Activated CD4-positive, alpha-beta memory T cell treated with anti-CD3 and anti-CD28 coated beads for 36 hours (primary cell): ENCODE measurements at regions of chr6 and their contacts with region 1.

Region 1: DNA sequence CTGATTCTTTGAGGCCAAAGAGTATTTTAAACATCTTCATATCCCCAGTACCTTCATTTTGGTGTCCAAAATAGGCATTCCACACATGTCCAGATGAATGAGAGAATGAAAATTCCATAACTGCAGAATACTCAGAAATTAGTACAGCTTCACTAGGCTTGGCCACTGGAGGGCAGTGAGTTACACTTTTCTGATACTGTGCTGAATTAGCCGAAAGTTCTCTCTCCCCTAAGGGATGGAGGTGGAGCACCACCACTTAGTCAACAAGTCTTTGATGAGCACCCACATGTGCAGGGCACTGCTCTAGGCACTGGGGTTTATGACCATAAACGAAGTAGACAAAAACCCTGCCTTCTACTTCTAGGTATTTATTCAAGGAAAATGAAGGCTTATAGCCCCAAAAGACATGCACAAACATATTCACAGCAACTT is 46.0 kb upstream of the TMEM217 start:
- DNase-seq: peak; percentile 28
- H3K4me3 Mint-ChIP-seq: no peak overlapping the region
- H3K27ac Mint-ChIP-seq: no peak overlapping the region
- H3K4me1 Mint-ChIP-seq: peaks cover 8% of the 10 kb centered on the region
- H3K27me3 Mint-ChIP-seq: no peaks in the 10 kb centered on the region

Region 2: DNA sequence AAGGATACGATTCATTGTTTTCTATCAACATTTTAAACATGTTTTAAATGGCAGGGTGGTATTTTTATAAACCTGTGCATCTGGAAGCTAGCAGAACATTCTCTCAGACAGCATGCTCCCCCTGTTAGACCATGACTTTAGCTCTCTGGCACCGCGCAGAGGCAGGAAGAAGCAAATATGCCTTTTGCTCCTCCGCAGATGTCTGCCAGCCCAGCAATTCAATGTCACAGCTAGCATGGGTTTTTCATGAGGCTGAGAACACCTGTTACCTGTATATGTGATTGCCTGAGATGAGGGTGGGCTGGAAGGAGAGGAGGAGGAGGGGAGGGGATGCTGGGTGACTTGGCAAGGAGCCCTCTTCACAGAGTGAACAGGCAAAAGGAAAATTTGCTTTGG is 324.6 kb before region 1 on chr6:
- CTCF ChIA-PET with region 1: no interaction called
- POLR2A ChIA-PET with region 1: no interaction called
- intact Hi-C with region 1: no loop called
- DNase-seq: peak; percentile 41
- H3K4me3 Mint-ChIP-seq: no peak overlapping the region
- H3K27ac Mint-ChIP-seq: peak overlapping the region; percentile 47
- H3K4me1 Mint-ChIP-seq: peaks cover 24% of the 10 kb centered on the region
- H3K27me3 Mint-ChIP-seq: no peaks in the 10 kb centered on the region

Region 3: DNA sequence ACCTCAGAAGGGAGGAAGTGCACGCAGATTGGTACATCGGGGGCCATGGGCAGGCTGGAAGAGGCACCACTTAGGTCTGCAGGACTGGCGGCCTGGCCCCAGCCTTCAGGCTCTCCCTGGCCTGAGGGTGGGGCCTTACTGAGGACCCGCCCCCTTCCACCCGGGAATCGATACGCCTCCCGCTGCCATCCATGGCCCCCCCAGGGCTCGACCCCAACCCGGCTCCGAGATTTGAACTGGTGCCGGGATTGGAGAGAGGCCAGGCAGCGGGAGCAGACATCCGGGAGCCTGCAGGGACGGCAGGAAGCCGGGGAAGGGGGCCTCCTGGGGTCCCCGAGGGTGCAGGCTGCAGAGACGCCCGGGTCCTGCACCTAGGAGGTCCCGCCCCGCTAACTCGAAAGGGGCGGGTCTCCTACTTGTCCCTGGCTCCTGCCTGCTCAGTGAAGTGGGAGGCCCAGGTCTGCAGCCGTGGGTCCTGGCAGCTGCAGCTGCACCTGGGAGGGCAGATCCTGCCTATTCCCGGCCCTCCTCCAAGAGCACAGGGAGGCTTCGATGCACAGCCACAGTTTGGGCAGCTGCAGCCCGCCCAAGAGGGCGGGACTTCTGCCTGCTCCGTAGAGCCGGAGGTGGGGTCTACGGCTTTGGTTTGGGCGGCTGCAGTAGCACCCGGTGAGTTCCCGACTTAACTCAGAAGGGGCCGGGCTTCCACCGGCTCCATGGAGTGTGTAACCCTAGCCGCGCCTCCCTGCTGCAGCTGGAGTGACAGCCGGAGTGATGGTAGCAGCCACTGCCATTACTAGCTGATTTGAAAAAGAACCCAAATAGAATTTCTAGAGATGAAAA is 81.6 kb before region 1 on chr6:
- CTCF ChIA-PET with region 1: no interaction called
- POLR2A ChIA-PET with region 1: no interaction called
- intact Hi-C with region 1: loop called (anchors 5 kb)
- DNase-seq: peak; percentile 89
- H3K4me3 Mint-ChIP-seq: peak overlapping the region; percentile 73
- H3K27ac Mint-ChIP-seq: no peak overlapping the region
- H3K4me1 Mint-ChIP-seq: peaks cover 18% of the 10 kb centered on the region
- H3K27me3 Mint-ChIP-seq: no peaks in the 10 kb centered on the region

Region 4: DNA sequence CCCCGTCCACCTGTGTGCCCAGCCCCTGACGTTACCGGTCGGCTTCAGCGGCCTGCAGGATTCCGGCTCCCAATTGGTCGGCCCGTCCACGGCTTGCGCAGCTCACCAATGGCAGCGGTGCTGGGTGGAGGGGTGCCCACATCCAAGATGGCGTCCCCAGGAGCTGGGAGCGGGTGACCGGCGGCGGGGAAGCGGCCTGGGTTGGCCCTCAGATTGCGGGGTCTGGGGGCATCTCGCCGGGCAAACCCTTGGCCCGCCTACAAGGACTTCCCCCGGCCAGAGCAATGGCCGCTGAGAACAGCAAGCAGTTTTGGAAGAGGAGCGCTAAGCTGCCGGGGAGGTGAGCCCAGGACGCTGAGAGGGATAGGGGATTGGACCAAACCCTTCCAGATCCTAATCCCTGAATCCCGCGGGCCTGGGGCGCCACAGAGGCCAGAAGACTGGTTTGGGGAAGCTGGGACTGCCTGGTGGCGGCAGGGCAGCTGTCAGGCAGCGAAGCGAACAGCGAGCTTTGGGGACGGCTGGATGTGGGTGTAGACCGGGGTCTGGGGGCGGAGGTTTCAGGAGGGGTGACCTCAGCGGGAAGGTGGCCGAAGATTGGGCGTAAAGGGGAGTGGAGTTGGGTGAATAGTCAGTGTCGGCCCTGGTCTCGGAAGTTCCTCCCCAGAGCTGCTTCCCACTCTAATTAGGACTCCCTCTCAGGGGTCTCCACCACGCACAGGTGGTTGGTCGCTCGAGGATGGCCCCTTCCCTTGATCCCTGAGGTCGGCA is 46.1 kb before region 1 on chr6 and contains the starts of genes TBC1D22B and TMEM217:
- CTCF ChIA-PET with region 1: no interaction called
- POLR2A ChIA-PET with region 1: no interaction called
- intact Hi-C with region 1: no loop called
- DNase-seq: peak; percentile 98
- H3K4me3 Mint-ChIP-seq: peak within 1 kb of the TSS; percentile 86
- H3K27ac Mint-ChIP-seq: peak within 1 kb of the TSS; percentile 87
- H3K4me1 Mint-ChIP-seq: peaks cover 46% of the 10 kb centered on the region
- H3K27me3 Mint-ChIP-seq: no peaks in the 10 kb centered on the region
- total RNA-seq, gene TBC1D22B: 14.4 to 15.7 TPM
- total RNA-seq, gene TMEM217: 2.2 to 3.3 TPM

Region 5: GRCh38 chr6:37314487-37315156 is 10.7 kb after region 1 on chr6:
- CTCF ChIA-PET with region 1: interaction called, 10 read pairs
- POLR2A ChIA-PET with region 1: interaction called, 3 read pairs
- intact Hi-C with region 1: no loop called
- DNase-seq: peak; percentile 66
- H3K4me3 Mint-ChIP-seq: no peak overlapping the region
- H3K27ac Mint-ChIP-seq: no peak overlapping the region
- H3K4me1 Mint-ChIP-seq: peaks cover 3% of the 10 kb centered on the region
- H3K27me3 Mint-ChIP-seq: no peaks in the 10 kb centered on the region